ENCODE measurements at regions of chr4 and their contacts with region 1.

Region 1: DNA sequence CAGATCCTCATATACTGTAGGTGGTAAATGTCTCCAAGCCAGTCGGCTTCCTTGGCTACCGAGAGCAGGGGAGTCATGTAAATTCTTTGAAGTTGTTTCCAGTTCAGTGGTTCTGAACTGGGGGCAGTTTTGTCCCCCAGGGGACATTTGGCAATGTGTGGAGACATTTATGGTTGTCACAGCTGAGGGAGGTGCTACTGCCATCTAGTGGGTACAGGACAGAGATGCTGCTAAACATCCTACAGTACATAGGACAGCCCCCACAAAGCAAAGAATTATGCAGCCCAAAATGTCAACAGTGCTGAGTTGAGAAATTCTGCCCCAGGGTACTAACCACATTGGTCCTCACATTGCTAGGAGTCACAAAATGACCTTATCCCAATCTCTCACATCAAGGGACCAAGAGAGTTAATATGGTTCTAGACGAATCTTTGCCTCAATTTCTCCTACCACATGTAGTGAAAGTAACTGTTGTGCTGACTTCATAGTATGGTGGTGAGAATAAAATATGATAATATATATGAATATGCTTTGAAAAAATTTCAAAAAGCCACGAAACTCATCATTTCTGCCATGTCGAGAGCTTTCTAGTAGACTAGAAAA is 104.4 kb upstream of the ARHGAP24 start:
- DNase-seq: peak; percentile 40
- H3K4me3 ChIP-seq: no peak overlapping the region
- H3K27ac ChIP-seq: no peak overlapping the region
- H3K4me1 ChIP-seq: no peaks in the 10 kb centered on the region
- H3K27me3 ChIP-seq: peaks cover 5 to 29% of the 10 kb centered on the region in 2 experiments
- CTCF ChIP-seq: peak; percentile 71 to 84
- POLR2A ChIP-seq: no peak

Region 2: GRCh38 chr4:84582302-84583000 is 788.1 kb before region 1 on chr4:
- CTCF ChIA-PET with region 1: no interaction called
- POLR2A ChIA-PET with region 1: no interaction called
- dilution Hi-C with region 1: no loop called
- intact Hi-C with region 1: loop called (anchors 5 kb)
- DNase-seq: peak; percentile 50
- H3K4me3 ChIP-seq: peak overlapping the region; percentile 32 to 52 (median 36)
- H3K27ac ChIP-seq: no peak overlapping the region
- H3K4me1 ChIP-seq: peaks cover 13% of the 10 kb centered on the region
- H3K27me3 ChIP-seq: peaks cover 50 to 67% of the 10 kb centered on the region in 2 experiments
- CTCF ChIP-seq: no peak
- POLR2A ChIP-seq: no peak

Region 3: GRCh38 chr4:85084380-85085094 is 286.0 kb before region 1 on chr4:
- CTCF ChIA-PET with region 1: interaction called, 7 read pairs
- POLR2A ChIA-PET with region 1: no interaction called
- dilution Hi-C with region 1: no loop called
- intact Hi-C with region 1: loop called (anchors 1 kb)
- DNase-seq: peak; percentile 67
- H3K4me3 ChIP-seq: no peak overlapping the region
- H3K27ac ChIP-seq: no peak overlapping the region
- H3K4me1 ChIP-seq: no peaks in the 10 kb centered on the region
- H3K27me3 ChIP-seq: peaks cover 4 to 11% of the 10 kb centered on the region in 2 experiments
- CTCF ChIP-seq: peak; percentile 43 to 47
- POLR2A ChIP-seq: no peak

Region 4: GRCh38 chr4:85147439-85148076 is 223.0 kb before region 1 on chr4:
- CTCF ChIA-PET with region 1: interaction called, 11 read pairs
- POLR2A ChIA-PET with region 1: no interaction called
- dilution Hi-C with region 1: no loop called
- intact Hi-C with region 1: loop called (anchors 1 kb)
- DNase-seq: peak; percentile 66
- H3K4me3 ChIP-seq: no peak overlapping the region
- H3K27ac ChIP-seq: no peak overlapping the region
- H3K4me1 ChIP-seq: no peaks in the 10 kb centered on the region
- H3K27me3 ChIP-seq: peaks cover 12 to 32% of the 10 kb centered on the region in 2 experiments
- CTCF ChIP-seq: peak; percentile 38 to 44
- POLR2A ChIP-seq: no peak

Region 5: GRCh38 chr4:85419103-85419502 is 48.6 kb after region 1 on chr4:
- CTCF ChIA-PET with region 1: no interaction called
- POLR2A ChIA-PET with region 1: no interaction called
- dilution Hi-C with region 1: no loop called
- intact Hi-C with region 1: no loop called
- DNase-seq: no peak
- H3K4me3 ChIP-seq: no peak overlapping the region
- H3K27ac ChIP-seq: no peak overlapping the region
- H3K4me1 ChIP-seq: no peaks in the 10 kb centered on the region
- H3K27me3 ChIP-seq: no peaks in the 10 kb centered on the region
- CTCF ChIP-seq: no peak
- POLR2A ChIP-seq: no peak

Measured in endothelial cell of umbilical vein (primary cell).